Dendritic cell treated with granulocyte-macrophage colony-stimulating factor and Interleukin-4, amounts not matched to agents 40 ng/mL and 50 ng/mL, for 4 days (primary cell): ENCODE measurements at regions of chr19 and their contacts with region 1.

Region 1: GRCh38 chr19:11710313-11710712 is 28.4 kb downstream of the ZNF823 start:
- H3K4me3 Mint-ChIP-seq: no peak overlapping the region
- H3K27ac Mint-ChIP-seq: no peak overlapping the region
- H3K4me1 Mint-ChIP-seq: peaks cover 11% of the 10 kb centered on the region
- H3K27me3 Mint-ChIP-seq: peaks cover 1% of the 10 kb centered on the region

Region 2: GRCh38 chr19:11722414-11722813 is 12.1 kb after region 1 on chr19:
- intact Hi-C with region 1: no loop called
- H3K4me3 Mint-ChIP-seq: no peak overlapping the region
- H3K27ac Mint-ChIP-seq: no peak overlapping the region
- H3K4me1 Mint-ChIP-seq: no peaks in the 10 kb centered on the region
- H3K27me3 Mint-ChIP-seq: no peaks in the 10 kb centered on the region

Region 3: GRCh38 chr19:11752244-11752736 is 42.0 kb after region 1 on chr19:
- intact Hi-C with region 1: loop called (anchors 5 kb)
- H3K4me3 Mint-ChIP-seq: no peak overlapping the region
- H3K27ac Mint-ChIP-seq: no peak overlapping the region
- H3K4me1 Mint-ChIP-seq: no peaks in the 10 kb centered on the region
- H3K27me3 Mint-ChIP-seq: peaks cover 8% of the 10 kb centered on the region

Region 4: GRCh38 chr19:11798391-11799330 is 88.3 kb after region 1 on chr19 and contains the start of gene ZNF491:
- intact Hi-C with region 1: no loop called
- H3K4me3 Mint-ChIP-seq: peak within 1 kb of the TSS; percentile 99
- H3K27ac Mint-ChIP-seq: peak within 1 kb of the TSS; percentile 74
- H3K4me1 Mint-ChIP-seq: peaks cover 14% of the 10 kb centered on the region
- H3K27me3 Mint-ChIP-seq: peaks cover 3% of the 10 kb centered on the region